WTC11 (cell line): ENCODE measurements at regions of chr1 and their contacts with region 1.

Region 1: DNA sequence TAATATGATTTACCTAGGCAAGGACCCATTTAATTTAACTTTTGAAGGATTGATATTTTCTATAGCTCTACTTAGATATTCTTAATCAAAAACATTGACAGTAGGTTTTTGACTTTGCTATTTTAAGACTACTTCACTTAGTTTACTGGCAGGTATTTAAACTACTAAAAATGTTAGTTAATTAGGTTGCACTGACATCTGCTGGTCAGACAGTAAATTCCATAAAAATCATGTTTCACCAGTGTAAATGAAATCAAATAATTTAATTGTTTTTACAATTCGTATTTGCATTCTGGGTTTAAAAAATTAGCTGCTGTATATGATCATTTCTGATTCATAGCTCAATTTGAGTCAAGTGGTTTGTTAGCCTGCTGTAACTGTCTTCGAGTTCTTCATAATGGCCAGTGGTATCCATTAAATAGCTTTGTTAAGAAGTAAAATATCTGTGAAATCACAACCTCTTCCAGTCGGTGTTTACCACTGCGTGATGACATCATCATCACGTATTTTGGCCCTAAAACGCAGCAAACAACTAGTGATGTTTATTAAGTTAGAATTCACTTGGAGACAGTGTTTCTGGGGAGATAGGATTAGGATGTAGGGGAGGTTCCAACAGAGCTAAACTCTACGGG is 26.2 kb downstream of the EXTL2 start:
- DNase-seq: no peak
- ATAC-seq: no peak
- H3K4me3 Mint-ChIP-seq: no peak overlapping the region
- H3K27ac Mint-ChIP-seq: no peak overlapping the region
- H3K4me1 Mint-ChIP-seq: peaks cover 7% of the 10 kb centered on the region; the same call in 1 of the 2 replicates
- H3K27me3 Mint-ChIP-seq: no peaks in the 10 kb centered on the region
- CTCF ChIP-seq: 0 out of 2 replicates have a peak, but pooled peaks have one; percentile 18

Region 2: DNA sequence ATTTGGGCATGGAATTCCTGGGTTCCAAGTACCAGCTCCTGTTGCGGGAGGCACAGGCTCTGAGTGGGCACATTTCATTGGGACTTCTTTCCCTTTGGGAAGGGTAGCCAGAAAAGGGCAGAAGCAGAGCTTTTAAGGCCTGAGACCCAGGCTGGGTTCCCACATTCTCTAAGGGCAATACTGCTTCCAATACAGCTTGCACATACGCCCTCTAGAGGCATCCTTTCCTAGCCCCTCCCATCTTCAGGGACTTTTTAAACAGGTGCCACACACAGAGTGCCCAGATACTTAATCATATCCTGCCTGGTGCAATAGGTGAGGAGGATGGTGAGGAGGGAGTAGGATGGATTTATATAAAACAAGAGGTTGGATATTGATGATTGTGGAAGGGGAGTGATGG is 324.8 kb before region 1 on chr1:
- CTCF ChIA-PET with region 1: interaction called, 10 read pairs
- POLR2A ChIA-PET with region 1: no interaction called
- DNase-seq: peak; percentile 54
- ATAC-seq: peak; percentile 76
- H3K4me3 Mint-ChIP-seq: no peak overlapping the region
- H3K27ac Mint-ChIP-seq: no peak overlapping the region
- H3K4me1 Mint-ChIP-seq: 0 out of 2 replicates have a peak, but pooled peaks cover 3% of the 10 kb centered on the region
- H3K27me3 Mint-ChIP-seq: peaks cover 47% of the 10 kb centered on the region
- CTCF ChIP-seq: peak; percentile 38; the same call in 1 of the 2 replicates

Region 3: GRCh38 chr1:100606438-100606837 is 262.0 kb before region 1 on chr1:
- CTCF ChIA-PET with region 1: interaction called, 11 read pairs
- POLR2A ChIA-PET with region 1: no interaction called
- DNase-seq: peak; percentile 22
- ATAC-seq: peak; percentile 73
- H3K4me3 Mint-ChIP-seq: no peak overlapping the region
- H3K27ac Mint-ChIP-seq: no peak overlapping the region
- H3K4me1 Mint-ChIP-seq: no peaks in the 10 kb centered on the region
- H3K27me3 Mint-ChIP-seq: peaks cover under 1% of the 10 kb centered on the region
- CTCF ChIP-seq: no peak

Region 4: DNA sequence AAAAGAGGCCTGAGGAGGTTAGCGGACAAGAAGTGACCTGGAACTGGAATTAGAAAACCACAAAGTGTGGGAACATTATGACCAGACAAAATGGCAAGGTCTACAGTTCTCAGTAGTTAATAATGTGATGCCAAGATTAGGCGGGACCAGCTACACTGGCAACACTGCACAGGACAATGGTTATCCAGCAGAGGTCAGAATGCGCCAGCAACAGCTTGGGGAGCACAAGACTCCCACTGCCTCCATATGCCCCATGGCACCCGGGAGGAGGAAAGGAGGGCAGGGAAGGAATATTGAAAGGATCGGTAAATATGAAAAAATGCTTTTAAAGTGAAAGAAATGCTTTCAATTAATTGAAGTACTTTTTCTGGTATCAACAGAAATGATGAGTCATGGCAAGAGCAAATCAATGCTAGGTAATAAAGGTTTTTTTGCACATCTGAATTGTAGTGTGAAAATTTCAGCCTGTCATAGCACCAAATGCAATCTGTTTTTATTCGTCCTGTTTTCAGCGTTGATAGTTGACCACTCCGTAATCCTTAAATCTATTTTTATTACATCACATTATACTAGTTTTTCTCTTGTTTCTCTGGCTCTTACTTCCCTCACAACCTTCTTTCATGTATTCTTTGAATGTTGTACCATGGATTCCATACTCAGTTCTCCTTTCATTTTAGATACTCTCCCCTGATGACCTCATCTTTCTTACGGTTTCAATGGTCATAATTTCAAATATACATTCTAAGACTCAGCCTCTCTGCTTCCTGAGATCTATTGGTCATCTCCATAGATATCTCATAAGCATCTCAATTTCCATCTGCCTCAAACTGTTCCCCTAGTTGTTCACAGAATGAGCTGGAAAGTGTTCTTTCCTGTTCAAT is 118.2 kb before region 1 on chr1:
- CTCF ChIA-PET with region 1: interaction called, 10 read pairs
- POLR2A ChIA-PET with region 1: no interaction called
- DNase-seq: peak; percentile 33
- ATAC-seq: peak; percentile 92
- H3K4me3 Mint-ChIP-seq: no peak overlapping the region
- H3K27ac Mint-ChIP-seq: no peak overlapping the region
- H3K4me1 Mint-ChIP-seq: peaks cover 3% of the 10 kb centered on the region
- H3K27me3 Mint-ChIP-seq: no peaks in the 10 kb centered on the region
- CTCF ChIP-seq: no peak

Region 5: GRCh38 chr1:100816049-100816448 is 52.4 kb before region 1 on chr1:
- CTCF ChIA-PET with region 1: interaction called, 10 read pairs
- POLR2A ChIA-PET with region 1: no interaction called
- DNase-seq: no peak
- ATAC-seq: no peak
- H3K4me3 Mint-ChIP-seq: no peak overlapping the region
- H3K27ac Mint-ChIP-seq: no peak overlapping the region
- H3K4me1 Mint-ChIP-seq: peaks cover 9% of the 10 kb centered on the region
- H3K27me3 Mint-ChIP-seq: no peaks in the 10 kb centered on the region
- CTCF ChIP-seq: no peak

Region 6: DNA sequence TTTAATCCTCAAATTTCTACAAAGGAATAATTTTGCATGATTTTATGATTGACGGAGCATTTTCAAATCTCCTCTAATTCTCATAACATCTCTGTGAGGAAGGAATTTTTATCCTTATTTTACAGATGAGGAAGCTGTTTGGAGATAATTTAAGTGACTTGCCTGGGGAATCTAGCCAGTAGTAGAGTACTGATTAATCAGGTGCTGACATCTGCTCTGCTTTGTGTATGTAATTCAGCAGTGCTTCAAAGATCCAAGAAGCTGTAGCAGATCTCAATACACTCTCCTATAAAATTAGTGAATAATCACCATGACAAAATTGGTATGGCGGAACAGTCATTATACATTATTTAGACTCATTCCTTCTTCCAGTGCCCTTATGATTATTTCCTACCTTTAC is 111.2 kb after region 1 on chr1:
- CTCF ChIA-PET with region 1: no interaction called
- POLR2A ChIA-PET with region 1: no interaction called
- DNase-seq: no peak
- ATAC-seq: no peak
- H3K4me3 Mint-ChIP-seq: no peak overlapping the region
- H3K27ac Mint-ChIP-seq: no peak overlapping the region
- H3K4me1 Mint-ChIP-seq: peaks cover 14% of the 10 kb centered on the region
- H3K27me3 Mint-ChIP-seq: no peaks in the 10 kb centered on the region
- CTCF ChIP-seq: no peak